ENCODE measurements at regions of chr1 and their contacts with region 1.

Region 1: GRCh38 chr1:52002038-52002917 is 11.8 kb upstream of the RAB3B start:
- DNase-seq: no peak
- H3K4me3 ChIP-seq: no peak overlapping the region
- H3K27ac ChIP-seq: no peak overlapping the region
- H3K4me1 ChIP-seq: no peaks in the 10 kb centered on the region
- H3K27me3 ChIP-seq: peaks cover 0 to 41% (median 0%) of the 10 kb centered on the region in 4 donors
- CTCF ChIP-seq: peak; percentile 63 to 93 (median 92)
- POLR2A ChIP-seq: no peak

Region 2: DNA sequence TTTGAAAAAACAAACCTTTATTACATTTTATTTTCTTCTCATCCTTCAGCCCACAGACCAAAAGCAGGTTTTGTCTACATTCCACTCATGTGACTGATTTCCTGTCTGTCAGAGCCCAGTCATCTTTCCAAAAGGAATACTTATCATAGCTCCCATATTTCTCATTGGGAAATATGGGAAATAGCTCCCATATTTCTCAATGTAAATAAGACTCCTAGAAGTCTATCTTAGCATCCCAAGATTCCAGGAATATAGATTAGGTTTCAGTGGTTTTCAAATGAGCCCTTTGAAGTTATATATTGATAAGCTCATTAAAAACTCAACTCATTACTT is 104.6 kb before region 1 on chr1:
- intact Hi-C with region 1: loop called (anchors 5 kb)
- DNase-seq: no peak
- H3K4me3 ChIP-seq: no peak overlapping the region
- H3K27ac ChIP-seq: no peak overlapping the region
- H3K4me1 ChIP-seq: no peaks in the 10 kb centered on the region
- H3K27me3 ChIP-seq: peaks cover 0 to 90% (median 0%) of the 10 kb centered on the region in 4 donors
- CTCF ChIP-seq: no peak
- POLR2A ChIP-seq: no peak

Region 3: DNA sequence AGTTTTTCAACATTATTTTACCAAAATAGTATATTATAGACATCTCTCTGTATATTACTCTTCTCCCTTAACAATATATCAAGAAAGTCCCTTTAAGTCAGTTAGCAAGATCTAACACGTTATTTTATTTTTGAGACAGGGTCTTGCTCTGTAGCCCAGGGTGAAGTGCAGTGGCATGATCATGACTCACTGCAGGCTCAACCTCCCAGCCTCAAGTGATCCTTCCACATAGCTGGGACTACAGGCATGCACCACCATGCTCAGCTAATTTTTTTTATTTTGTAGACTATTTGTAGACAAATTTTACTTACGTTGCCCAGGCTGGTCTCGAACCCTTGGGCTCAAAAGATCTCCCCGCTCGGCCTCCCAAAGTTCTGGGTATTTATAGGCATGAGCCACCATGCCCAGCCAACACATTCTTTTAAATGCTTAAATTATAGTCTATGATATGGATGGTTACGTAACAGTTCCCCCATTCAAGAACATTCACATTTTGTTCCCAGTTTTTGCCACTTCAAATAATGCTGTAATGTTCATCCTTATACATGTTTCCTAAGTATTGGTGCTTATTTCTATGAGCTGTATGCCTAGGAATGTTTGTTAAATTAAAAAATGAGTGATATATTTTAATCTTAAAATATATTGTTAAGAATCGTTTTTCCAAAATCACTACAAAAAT is 480.2 kb after region 1 on chr1:
- intact Hi-C with region 1: no loop called
- DNase-seq: no peak
- H3K4me3 ChIP-seq: no peak overlapping the region
- H3K27ac ChIP-seq: no peak overlapping the region
- H3K4me1 ChIP-seq: no peaks in the 10 kb centered on the region
- H3K27me3 ChIP-seq: no peaks in the 10 kb centered on the region
- CTCF ChIP-seq: no peak
- POLR2A ChIP-seq: no peak

Measured in esophagus squamous epithelium (tissue), 5 donors.